ENCODE measurements at regions of chr12 and their contacts with region 1.

Region 1: DNA sequence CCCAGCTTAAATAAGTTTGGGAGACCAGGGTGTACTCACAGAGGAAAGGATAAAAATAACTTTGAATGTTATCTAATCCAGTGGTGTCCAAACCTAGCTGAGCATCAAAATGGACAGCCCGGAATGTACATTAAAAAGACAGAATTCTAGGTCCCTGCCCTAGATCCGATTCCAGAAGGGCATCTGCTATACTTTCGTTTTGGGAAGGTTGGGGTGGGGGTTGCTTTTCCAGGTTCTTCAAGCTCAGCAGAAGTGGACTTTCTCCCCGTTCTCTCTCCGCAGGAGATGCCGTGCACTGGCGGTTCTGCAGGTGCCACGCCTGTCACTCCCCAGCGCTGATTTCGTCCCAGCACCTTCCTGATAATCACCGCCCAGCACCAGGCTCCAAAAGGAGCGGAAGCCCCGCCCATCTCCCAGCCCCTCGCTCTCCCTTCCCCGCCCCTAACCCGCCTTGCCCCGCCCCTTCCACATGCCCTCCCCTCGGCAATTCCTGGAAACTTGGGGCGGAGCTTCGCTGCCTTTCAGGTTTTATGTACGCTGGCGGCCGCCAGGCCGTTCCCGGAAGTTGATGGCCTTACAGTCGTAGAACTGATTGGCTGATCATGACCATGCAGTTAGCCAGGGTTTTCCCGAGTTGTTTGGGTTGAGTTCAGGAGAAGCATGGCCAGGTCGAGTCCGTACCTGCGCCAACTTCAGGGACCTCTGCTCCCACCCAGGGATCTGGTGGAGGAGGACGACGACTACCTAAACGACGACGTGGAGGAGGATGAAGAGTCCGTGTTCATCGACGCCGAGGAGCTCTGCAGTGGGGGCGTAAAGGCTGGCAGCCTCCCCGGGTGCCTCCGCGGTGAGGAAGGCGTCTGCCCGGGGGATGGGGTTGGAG is at the start of gene HELB:
- DNase-seq: peak; percentile 99
- ATAC-seq: peak; percentile 80
- H3K4me3 Mint-ChIP-seq: peak within 1 kb of the TSS; percentile 99
- H3K27ac Mint-ChIP-seq: peak within 1 kb of the TSS; percentile 99
- H3K4me1 Mint-ChIP-seq: peaks cover 50% of the 10 kb centered on the region
- H3K27me3 Mint-ChIP-seq: peaks cover 4% of the 10 kb centered on the region
- total RNA-seq, gene HELB: 24.2 to 25.7 TPM

Region 2: GRCh38 chr12:66092559-66093269 is 209.5 kb before region 1 on chr12:
- CTCF ChIA-PET with region 1: no interaction called
- POLR2A ChIA-PET with region 1: no interaction called
- DNase-seq: no peak
- ATAC-seq: no peak
- H3K4me3 Mint-ChIP-seq: no peak overlapping the region
- H3K27ac Mint-ChIP-seq: no peak overlapping the region
- H3K4me1 Mint-ChIP-seq: no peaks in the 10 kb centered on the region
- H3K27me3 Mint-ChIP-seq: peaks cover 9% of the 10 kb centered on the region

Region 3: DNA sequence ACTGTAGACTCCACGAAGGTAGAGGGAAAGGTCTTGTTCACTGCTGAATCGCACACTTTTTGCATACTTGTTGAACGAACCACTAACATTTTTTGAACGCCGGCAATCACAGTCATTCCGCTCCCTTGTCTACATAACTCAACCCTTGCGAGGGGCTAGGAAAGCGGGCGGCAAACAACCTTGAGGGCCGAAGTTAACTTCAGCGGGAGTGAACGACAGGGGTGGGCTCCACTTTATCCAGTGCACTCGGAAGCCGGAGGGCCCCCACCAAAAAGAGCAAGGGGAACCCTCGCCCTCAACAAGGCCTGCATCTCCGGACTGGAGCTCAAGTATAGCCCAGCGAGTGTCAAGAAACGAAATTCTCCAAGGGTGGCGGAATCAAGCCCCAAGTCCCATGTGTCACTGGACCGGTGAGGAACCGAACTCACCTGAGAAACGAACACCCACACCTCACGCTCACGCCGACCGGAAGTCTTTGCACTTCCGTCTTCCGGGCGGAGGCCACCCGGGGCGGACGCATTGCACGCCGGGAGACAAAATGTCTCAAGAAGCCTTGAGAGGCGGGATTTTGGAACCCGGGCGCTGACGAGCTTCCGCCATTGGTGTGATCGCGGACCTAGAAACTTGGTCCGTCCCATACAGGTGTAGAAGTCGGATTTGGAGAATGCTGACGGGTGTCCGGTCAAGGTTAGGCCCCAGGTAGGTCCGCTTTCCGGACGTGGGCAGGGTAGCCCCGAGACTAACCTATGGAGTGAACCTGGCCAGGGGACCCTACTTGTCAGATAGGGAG is 171.7 kb before region 1 on chr12 and contains the start of gene LLPH:
- CTCF ChIA-PET with region 1: no interaction called
- POLR2A ChIA-PET with region 1: interaction called, 11 read pairs
- DNase-seq: peak; percentile 94
- ATAC-seq: peak; percentile 95
- H3K4me3 Mint-ChIP-seq: peak within 1 kb of the TSS; percentile 98
- H3K27ac Mint-ChIP-seq: peak within 1 kb of the TSS; percentile 99
- H3K4me1 Mint-ChIP-seq: peaks cover 62% of the 10 kb centered on the region
- H3K27me3 Mint-ChIP-seq: no peaks in the 10 kb centered on the region
- total RNA-seq, gene LLPH: 35.9 to 39.1 TPM

Region 4: GRCh38 chr12:66169221-66170170 is 132.7 kb before region 1 on chr12 and contains the start of gene TMBIM4:
- CTCF ChIA-PET with region 1: no interaction called
- POLR2A ChIA-PET with region 1: interaction called, 50 read pairs
- DNase-seq: peak; percentile 89
- ATAC-seq: peak; percentile 87
- H3K4me3 Mint-ChIP-seq: peak within 1 kb of the TSS; percentile 84
- H3K27ac Mint-ChIP-seq: peak within 1 kb of the TSS; percentile 99
- H3K4me1 Mint-ChIP-seq: peaks cover 43% of the 10 kb centered on the region
- H3K27me3 Mint-ChIP-seq: no peaks in the 10 kb centered on the region
- total RNA-seq, gene TMBIM4: 60.5 to 61.6 TPM

Region 5: DNA sequence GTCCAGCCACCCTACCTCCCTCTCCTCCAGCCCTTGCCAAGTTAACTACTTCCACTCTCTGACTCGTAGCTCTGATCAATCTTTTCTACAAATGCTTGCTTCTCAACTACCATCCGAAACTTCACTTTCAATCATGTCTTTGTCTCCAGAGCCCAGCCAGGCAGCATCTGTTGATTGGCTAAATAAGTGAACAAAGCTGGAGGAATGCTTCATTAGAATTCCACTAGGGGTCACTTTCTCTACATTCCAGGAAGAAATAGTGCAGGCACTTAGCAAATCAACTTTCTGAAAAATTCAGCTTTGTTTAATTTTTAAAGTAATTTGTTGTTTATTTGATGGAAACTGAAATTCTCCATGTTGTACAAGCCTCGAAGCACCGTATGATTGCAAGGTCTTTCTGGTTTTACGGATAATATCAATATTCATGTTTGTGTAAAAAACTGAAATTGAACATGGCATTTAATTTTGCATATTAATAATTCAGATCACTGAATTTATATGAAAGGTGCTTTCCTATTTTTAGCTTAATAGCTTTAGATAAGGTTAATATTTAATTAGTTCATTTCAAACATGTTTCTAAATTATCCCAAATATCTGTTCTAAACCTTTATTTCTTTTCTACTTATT is 32.3 kb before region 1 on chr12:
- CTCF ChIA-PET with region 1: interaction called, 12 read pairs
- POLR2A ChIA-PET with region 1: interaction called, 5 read pairs
- DNase-seq: peak; percentile 33
- ATAC-seq: peak; percentile 72
- H3K4me3 Mint-ChIP-seq: no peak overlapping the region
- H3K27ac Mint-ChIP-seq: no peak overlapping the region
- H3K4me1 Mint-ChIP-seq: peaks cover 1% of the 10 kb centered on the region
- H3K27me3 Mint-ChIP-seq: peaks cover 2% of the 10 kb centered on the region

Region 6: GRCh38 chr12:66279123-66279712 is 23.0 kb before region 1 on chr12:
- CTCF ChIA-PET with region 1: interaction called, 30 read pairs
- POLR2A ChIA-PET with region 1: interaction called, 4 read pairs
- DNase-seq: peak; percentile 67
- ATAC-seq: peak; percentile 79
- H3K4me3 Mint-ChIP-seq: no peak overlapping the region
- H3K27ac Mint-ChIP-seq: no peak overlapping the region
- H3K4me1 Mint-ChIP-seq: peaks cover 13% of the 10 kb centered on the region
- H3K27me3 Mint-ChIP-seq: no peaks in the 10 kb centered on the region

Region 7: GRCh38 chr12:66288121-66288520 is 14.1 kb before region 1 on chr12:
- CTCF ChIA-PET with region 1: interaction called, 5 read pairs
- POLR2A ChIA-PET with region 1: interaction called, 58 read pairs
- DNase-seq: peak; percentile 76
- ATAC-seq: peak; percentile 96
- H3K4me3 Mint-ChIP-seq: peak overlapping the region; percentile 54
- H3K27ac Mint-ChIP-seq: peak overlapping the region; percentile 77
- H3K4me1 Mint-ChIP-seq: peaks cover 62% of the 10 kb centered on the region
- H3K27me3 Mint-ChIP-seq: no peaks in the 10 kb centered on the region

Region 8: GRCh38 chr12:66312189-66312588 is 10.0 kb after region 1 on chr12:
- CTCF ChIA-PET with region 1: no interaction called
- POLR2A ChIA-PET with region 1: interaction called, 15 read pairs
- DNase-seq: no peak
- ATAC-seq: no peak
- H3K4me3 Mint-ChIP-seq: no peak overlapping the region
- H3K27ac Mint-ChIP-seq: no peak overlapping the region
- H3K4me1 Mint-ChIP-seq: peaks cover 47% of the 10 kb centered on the region
- H3K27me3 Mint-ChIP-seq: no peaks in the 10 kb centered on the region

Measured in activated CD8-positive, alpha-beta T cell treated with anti-CD3 and anti-CD28 coated beads, Interleukin-2, amount 10 ng/mL, durations not matched to agents 7 days and 5 days (primary cell).